ENCODE measurements at regions of chr1 and their contacts with region 1.

Region 1: GRCh38 chr1:198937231-198938031 is 298.6 kb downstream of the PTPRC start:
- DNase-seq: peak; percentile 72
- H3K4me3 Mint-ChIP-seq: peak overlapping the region; percentile 89
- H3K27ac Mint-ChIP-seq: peak overlapping the region; percentile 84
- H3K4me1 Mint-ChIP-seq: peaks cover 21% of the 10 kb centered on the region
- H3K27me3 Mint-ChIP-seq: no peaks in the 10 kb centered on the region

Region 2: DNA sequence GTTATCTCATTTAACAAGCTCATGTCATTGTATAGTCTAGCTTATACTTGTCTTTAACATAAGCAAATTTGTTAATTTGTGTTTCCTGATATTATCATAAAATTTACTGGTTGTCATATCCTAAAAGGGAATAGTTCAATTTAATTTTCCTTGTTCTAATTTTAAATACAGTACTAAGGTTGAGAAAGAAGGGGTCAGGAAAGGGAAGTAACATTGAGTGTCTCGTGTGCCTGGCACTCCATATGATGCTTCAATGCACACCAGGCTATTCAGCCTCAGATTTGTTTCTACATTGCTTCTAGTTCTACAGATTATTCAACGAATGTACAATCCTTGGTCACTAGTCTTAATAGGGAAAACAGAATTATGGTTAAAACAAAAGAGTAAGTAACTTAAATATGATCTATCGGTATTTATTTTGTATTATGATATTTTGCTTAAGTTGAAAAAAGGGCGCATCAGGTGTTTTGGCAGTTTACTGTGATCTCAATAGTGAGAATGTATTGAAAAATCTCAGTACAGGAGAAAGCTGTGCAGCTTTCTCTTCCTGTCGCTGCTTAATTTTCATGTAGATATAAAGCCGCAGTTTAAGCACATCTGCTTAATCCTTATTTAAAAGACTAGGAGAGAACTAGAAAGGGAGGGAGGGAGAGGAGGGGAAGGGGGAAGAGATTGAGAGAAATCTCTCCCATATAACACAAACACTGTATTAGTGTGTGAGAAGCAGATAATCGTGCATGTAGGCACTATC is 285.6 kb before region 1 on chr1:
- CTCF ChIA-PET with region 1: no interaction called
- intact Hi-C with region 1: loop called (anchors 5 kb)
- DNase-seq: no peak
- H3K4me3 Mint-ChIP-seq: peak overlapping the region; percentile 73
- H3K27ac Mint-ChIP-seq: peak overlapping the region; percentile 100
- H3K4me1 Mint-ChIP-seq: peaks cover 69% of the 10 kb centered on the region
- H3K27me3 Mint-ChIP-seq: no peaks in the 10 kb centered on the region

Region 3: DNA sequence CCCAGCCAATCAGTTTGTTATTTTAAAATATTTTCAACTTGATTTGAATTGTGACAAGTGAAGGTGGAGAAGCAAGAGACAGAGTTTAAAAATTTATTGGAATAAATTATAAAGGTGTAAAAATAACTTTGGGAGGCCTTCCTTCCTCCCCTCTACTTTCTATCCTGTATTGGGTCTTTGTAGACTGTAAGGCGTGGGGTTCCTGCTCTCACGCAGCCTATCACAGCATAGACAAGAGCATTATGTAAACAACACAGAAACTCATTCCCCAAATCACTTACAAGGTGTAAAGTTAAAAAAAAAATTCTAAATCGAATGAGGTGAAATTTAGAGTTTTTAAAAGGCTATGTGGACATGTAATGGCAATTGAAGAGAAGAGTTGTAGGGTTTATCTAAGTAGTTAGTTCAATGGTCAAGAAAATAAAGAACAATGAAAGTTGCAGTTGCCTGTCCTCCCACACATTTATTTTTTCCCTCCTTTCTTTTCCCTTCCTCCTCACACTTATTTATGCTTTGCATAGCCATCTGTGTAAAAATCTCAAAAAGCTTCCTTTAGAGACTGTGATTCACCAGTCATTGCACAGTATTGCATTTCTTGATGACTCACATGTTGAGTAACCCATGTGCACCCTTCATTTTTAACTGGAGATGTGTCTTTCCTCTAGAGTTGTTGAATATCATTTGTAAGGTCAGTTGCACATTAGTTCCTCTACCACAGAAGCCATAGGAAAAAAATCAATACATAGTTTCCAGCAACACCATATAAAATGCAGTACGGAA is 56.4 kb before region 1 on chr1:
- CTCF ChIA-PET with region 1: no interaction called
- intact Hi-C with region 1: loop called (anchors 1 kb)
- DNase-seq: peak; percentile 40
- H3K4me3 Mint-ChIP-seq: no peak overlapping the region
- H3K27ac Mint-ChIP-seq: peak overlapping the region; percentile 32
- H3K4me1 Mint-ChIP-seq: peaks cover 33% of the 10 kb centered on the region
- H3K27me3 Mint-ChIP-seq: no peaks in the 10 kb centered on the region

Region 4: GRCh38 chr1:198922638-198923430 is 14.6 kb before region 1 on chr1:
- CTCF ChIA-PET with region 1: interaction called, 3 read pairs
- intact Hi-C with region 1: loop called (anchors 1 kb)
- DNase-seq: no peak
- H3K4me3 Mint-ChIP-seq: no peak overlapping the region
- H3K27ac Mint-ChIP-seq: peak overlapping the region; percentile 79
- H3K4me1 Mint-ChIP-seq: peaks cover 71% of the 10 kb centered on the region
- H3K27me3 Mint-ChIP-seq: no peaks in the 10 kb centered on the region

Region 5: GRCh38 chr1:199041173-199041914 is 103.9 kb after region 1 on chr1:
- CTCF ChIA-PET with region 1: no interaction called
- intact Hi-C with region 1: loop called (anchors 5 kb)
- DNase-seq: peak; percentile 34
- H3K4me3 Mint-ChIP-seq: peak overlapping the region; percentile 10
- H3K27ac Mint-ChIP-seq: peak overlapping the region; percentile 38
- H3K4me1 Mint-ChIP-seq: peaks cover 20% of the 10 kb centered on the region
- H3K27me3 Mint-ChIP-seq: no peaks in the 10 kb centered on the region

Region 6: GRCh38 chr1:199226163-199226562 is 288.7 kb after region 1 on chr1:
- CTCF ChIA-PET with region 1: no interaction called
- intact Hi-C with region 1: loop called (anchors 1 kb)
- DNase-seq: peak; percentile 66
- H3K4me3 Mint-ChIP-seq: peak overlapping the region; percentile 46
- H3K27ac Mint-ChIP-seq: peak overlapping the region; percentile 27
- H3K4me1 Mint-ChIP-seq: peaks cover 23% of the 10 kb centered on the region
- H3K27me3 Mint-ChIP-seq: no peaks in the 10 kb centered on the region

Measured in activated naive CD4-positive, alpha-beta T cell treated with anti-CD3 and anti-CD28 coated beads for 36 hours (primary cell).